Naive thymus-derived CD8-positive, alpha-beta T cell (primary cell): ENCODE measurements at regions of chr19 and their contacts with region 1.

Region 1: GRCh38 chr19:34364830-34365462 is at the start of gene GPI:
- DNase-seq: peak; percentile 51 to 76 (median 65)
- ATAC-seq: peak; percentile 91 to 92
- H3K4me3 Mint-ChIP-seq: peak within 1 kb of the TSS; percentile 92 to 98 (median 95)
- H3K27ac Mint-ChIP-seq: peak within 1 kb of the TSS; percentile 80 to 95 (median 93)
- H3K4me1 Mint-ChIP-seq: peaks cover 20 to 41% (median 35%) of the 10 kb centered on the region in 4 donors
- H3K27me3 Mint-ChIP-seq: no peaks in the 10 kb centered on the region
- polyA plus RNA-seq, gene GPI: 126 to 179 (median 142) TPM

Region 2: DNA sequence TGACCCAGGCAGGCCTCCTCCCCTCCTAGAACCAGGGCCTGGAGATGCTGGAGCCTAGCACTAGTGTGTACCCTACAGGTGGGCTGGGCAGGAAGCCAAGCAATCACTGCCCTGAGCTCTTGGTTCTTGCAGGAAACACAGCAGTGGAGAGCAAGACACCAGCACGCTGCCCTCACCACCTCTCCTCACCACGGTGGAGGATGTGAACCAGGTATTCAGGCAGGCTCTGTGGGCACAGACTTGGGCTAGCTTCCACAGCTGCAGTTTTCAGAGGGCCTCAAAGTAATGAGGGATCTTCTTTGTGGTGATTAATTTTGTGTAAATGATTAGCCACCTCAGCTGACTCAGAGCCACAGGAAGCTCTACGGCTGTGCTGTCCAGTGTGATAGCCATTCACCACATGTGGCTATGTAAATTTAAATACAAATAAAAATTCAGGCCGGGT is 13.5 kb before region 1 on chr19:
- POLR2A ChIA-PET with region 1: interaction called, 15 read pairs
- DNase-seq: peak in 5 of 10 donors; percentile 10 to 48 (median 35)
- ATAC-seq: peak in 1 of 2 donors; percentile 15
- H3K4me3 Mint-ChIP-seq: peak overlapping the region in 9 of 10 donors; percentile 24 to 67 (median 50)
- H3K27ac Mint-ChIP-seq: peak overlapping the region; percentile 53 to 93 (median 82)
- H3K4me1 Mint-ChIP-seq: peaks cover 11 to 35% (median 25%) of the 10 kb centered on the region in 4 donors
- H3K27me3 Mint-ChIP-seq: no peaks in the 10 kb centered on the region